ENCODE measurements at regions of chr17 and their contacts with region 1.

Region 1: DNA sequence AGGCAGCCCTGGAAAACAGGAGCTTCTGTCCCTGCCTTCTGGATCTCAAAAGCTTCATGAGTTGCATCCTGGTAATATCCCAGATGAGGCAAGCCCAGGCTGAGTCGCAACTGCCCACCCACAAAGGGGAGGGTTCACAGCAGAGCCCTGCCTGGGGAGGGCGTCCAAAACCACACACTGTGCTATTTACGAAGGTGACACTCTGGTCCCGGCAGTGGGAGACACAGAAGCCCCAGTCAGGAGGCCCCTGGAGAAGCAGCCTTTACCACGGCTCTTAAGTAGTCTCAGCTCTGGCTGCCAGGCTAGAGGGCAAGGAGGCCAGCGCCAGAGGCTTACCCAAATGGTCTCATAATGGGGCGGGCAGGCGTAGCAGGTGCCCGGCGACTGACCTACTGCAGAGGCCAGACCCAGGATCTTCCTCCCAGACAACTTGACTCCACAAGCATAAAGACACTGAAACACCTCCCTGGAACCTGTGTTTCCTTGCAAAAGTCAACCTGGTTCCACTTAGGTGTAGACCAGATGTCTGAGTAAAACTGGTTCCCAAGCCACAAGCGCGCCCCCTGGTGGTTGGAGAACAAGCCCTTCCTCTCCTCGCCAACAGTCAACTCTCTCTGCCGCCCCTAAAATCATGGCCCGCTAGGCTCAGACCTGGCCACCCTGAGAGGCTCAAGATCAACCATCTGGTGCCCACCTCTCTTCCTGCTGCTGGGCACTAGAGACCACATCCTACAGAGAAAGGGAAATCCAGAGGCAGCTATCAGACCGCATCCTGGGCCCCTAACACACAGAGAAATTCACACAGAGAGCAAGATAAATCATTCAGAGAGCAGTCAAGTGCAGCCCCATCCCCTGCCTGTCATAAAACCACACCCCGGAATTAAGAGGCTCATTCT is 5.2 kb downstream of the AXIN2 start:
- DNase-seq: no peak

Region 2: DNA sequence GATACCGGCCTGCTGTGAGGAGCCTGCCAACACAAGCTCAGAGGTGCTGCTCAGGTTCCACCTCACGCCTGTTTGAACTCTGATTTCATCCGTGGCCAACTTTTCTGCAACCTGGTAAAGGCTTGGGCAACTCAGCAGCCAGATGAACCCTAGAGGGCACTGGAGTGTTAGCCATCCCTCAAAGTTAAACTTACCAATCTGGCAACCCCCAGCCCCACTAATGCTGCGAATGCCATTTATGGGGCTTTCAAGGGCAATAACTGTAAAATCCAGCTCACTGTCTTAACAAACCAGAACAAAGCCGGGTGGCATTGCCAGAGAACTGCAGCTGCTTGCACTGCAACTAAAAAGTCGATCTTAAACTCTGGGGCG is 100.3 kb before region 1 on chr17:
- intact Hi-C with region 1: loop called (anchors 2 kb)
- DNase-seq: no peak

Region 3: GRCh38 chr17:65750631-65751117 is 194.4 kb after region 1 on chr17:
- intact Hi-C with region 1: loop called (anchors 5 kb)
- DNase-seq: peak; percentile 76

Region 4: GRCh38 chr17:65785109-65785508 is 228.8 kb after region 1 on chr17:
- intact Hi-C with region 1: loop called (anchors 10 kb)
- DNase-seq: no peak

Region 5: DNA sequence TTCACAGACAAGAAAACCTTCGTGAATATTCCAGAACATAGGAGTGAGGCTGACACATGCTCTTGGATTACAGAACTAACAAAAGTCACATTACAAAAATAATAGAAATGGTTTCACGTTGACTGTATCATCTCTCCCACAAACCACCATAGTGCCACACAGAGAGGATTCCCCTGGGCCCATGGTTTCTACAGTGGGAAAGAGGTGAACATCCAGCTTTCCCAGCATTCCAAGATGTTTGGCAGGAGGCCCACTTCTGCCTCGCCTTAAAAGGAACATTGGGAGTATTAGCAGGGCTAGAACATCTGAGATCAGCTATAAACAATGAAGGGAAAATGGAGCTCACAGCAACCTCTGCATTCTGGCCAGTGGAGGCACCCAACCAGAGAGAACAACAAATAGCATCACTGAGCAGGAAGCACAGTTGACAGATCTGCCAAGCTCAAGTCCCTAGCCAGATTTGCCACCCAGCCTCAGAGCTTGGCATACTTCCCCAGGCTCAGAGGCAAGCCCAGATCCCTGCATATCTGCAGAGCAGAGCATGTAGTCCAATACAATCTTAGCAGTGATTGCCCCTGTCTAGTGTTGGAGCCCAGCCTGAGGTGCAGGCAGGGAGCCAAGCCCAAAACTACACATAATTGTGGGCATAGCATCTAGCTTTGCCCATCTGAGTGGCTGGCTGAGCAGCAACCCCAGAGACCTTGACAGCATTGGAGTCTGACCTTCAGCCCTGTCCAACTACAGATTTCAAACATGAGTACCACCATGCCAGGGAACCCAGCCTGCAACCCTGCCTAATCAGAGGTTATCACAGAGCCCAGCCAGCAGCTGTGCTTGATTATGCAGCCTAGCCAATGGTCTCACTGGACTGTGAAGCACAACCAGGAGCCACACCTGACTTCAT is 375.2 kb after region 1 on chr17:
- intact Hi-C with region 1: loop called (anchors 5 kb)
- DNase-seq: peak; percentile 79

Region 6: GRCh38 chr17:66177048-66177447 is 620.8 kb after region 1 on chr17:
- intact Hi-C with region 1: loop called (anchors 10 kb)
- DNase-seq: no peak